Calu3 (cell line): ENCODE measurements at regions of chr1 and their contacts with region 1.

Region 1: DNA sequence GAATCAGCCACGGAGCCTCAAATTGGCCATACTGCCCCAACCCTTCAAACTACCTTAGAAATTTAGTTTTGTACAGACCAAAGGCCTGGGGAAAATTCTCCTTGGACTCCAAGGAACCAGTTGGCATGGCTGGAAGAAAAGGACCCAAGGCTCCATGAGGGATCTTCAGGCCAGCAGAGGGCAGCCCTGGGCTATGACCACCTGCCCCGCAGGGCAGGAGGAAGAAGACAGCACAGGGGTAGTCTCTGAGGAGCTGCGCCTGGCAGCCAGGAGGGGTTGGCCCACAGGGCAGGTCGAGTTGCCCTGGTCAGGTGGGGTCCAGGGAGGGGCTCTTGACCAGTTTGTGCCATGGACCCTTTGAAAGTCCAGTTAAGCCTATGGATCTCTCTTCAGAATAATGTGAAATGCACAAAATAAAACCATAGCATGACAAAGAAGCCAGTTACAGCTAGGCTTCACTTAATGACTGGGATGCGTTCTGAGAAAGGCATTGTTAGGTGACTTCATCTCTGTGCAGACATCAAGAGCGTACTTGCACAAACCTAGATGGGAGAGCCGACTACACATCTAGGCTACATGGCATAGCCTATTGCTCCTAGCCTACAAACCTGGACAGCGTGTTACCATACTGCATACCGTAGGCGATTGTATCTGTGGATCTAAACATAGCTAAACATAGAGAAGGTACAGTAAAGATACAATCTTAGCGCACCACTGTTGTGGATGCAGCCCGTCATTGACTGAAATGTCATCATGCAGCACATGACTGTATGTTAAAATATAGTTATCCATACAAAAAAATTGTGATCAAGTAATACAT is 26.1 kb downstream of the CACNA1S start:
- DNase-seq: peak; percentile 85
- H3K4me3 Mint-ChIP-seq: no peak overlapping the region
- H3K27ac Mint-ChIP-seq: no peak overlapping the region
- H3K4me1 Mint-ChIP-seq: no peaks in the 10 kb centered on the region
- H3K27me3 Mint-ChIP-seq: peaks cover 81% of the 10 kb centered on the region
- CTCF ChIP-seq: peak; percentile 67

Region 2: GRCh38 chr1:200724064-200724463 is 362.1 kb before region 1 on chr1:
- CTCF ChIA-PET with region 1: no interaction called
- intact Hi-C with region 1: no loop called
- DNase-seq: no peak
- H3K4me3 Mint-ChIP-seq: no peak overlapping the region
- H3K27ac Mint-ChIP-seq: no peak overlapping the region
- H3K4me1 Mint-ChIP-seq: no peaks in the 10 kb centered on the region
- H3K27me3 Mint-ChIP-seq: no peaks in the 10 kb centered on the region
- CTCF ChIP-seq: no peak

Region 3: GRCh38 chr1:201114236-201115131 is 28.4 kb after region 1 on chr1:
- CTCF ChIA-PET with region 1: interaction called, 26 read pairs
- intact Hi-C with region 1: loop called (anchors 1 kb)
- DNase-seq: peak; percentile 95
- H3K4me3 Mint-ChIP-seq: peak overlapping the region; percentile 90
- H3K27ac Mint-ChIP-seq: peak overlapping the region; percentile 81
- H3K4me1 Mint-ChIP-seq: no peaks in the 10 kb centered on the region
- H3K27me3 Mint-ChIP-seq: peaks cover 80% of the 10 kb centered on the region
- CTCF ChIP-seq: peak; percentile 72

Region 4: GRCh38 chr1:201119206-201120197 is 33.4 kb after region 1 on chr1:
- CTCF ChIA-PET with region 1: interaction called, 26 read pairs
- intact Hi-C with region 1: loop called (anchors 1 kb)
- DNase-seq: peak; percentile 60
- H3K4me3 Mint-ChIP-seq: no peak overlapping the region
- H3K27ac Mint-ChIP-seq: no peak overlapping the region
- H3K4me1 Mint-ChIP-seq: no peaks in the 10 kb centered on the region
- H3K27me3 Mint-ChIP-seq: peaks cover 88% of the 10 kb centered on the region
- CTCF ChIP-seq: peak; percentile 71

Region 5: GRCh38 chr1:201224666-201225370 is 138.7 kb after region 1 on chr1:
- CTCF ChIA-PET with region 1: interaction called, 7 read pairs
- intact Hi-C with region 1: loop called (anchors 5 kb)
- DNase-seq: no peak
- H3K4me3 Mint-ChIP-seq: no peak overlapping the region
- H3K27ac Mint-ChIP-seq: no peak overlapping the region
- H3K4me1 Mint-ChIP-seq: no peaks in the 10 kb centered on the region
- H3K27me3 Mint-ChIP-seq: peaks cover 67% of the 10 kb centered on the region
- CTCF ChIP-seq: no peak